Right lobe of liver (tissue), 6 donors: ENCODE measurements at regions of chr5 and their contacts with region 1.

Region 1: DNA sequence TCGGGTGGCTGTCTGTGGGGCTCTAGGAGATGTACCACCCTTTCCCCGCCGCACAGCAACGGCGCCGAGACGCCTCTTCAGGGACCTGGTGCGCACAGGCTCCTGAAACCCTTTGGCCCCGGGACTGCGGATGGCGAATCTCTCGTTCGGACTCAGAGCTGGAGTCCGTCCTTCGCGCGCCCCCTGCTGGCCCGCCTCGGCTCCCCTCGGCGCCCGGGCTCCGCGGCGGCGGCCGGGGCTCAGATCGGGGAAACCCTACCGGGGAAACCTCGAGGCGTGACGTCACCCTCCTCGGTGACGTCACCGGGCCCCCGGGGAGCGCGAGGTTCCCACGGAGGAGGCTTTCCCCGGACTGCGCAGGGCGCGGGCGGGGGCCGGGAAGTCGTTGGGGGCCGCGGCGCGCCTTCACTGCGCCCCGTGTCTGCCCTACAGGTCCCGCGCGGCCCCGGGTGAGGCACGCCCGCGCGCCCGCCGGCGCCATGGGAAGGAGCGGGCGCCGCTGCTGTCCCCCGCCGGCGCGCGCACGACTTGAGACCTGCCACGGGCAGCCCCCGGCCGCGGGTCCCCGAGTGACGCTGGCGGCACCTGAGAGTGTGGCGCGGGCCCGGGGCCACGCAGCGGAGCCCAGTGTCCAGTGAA is 7.9 kb downstream of the PRR7 start:
- DNase-seq: peak; percentile 92 to 94 (median 93)
- ATAC-seq: peak; percentile 70 to 83 (median 75)
- H3K4me3 ChIP-seq: peak overlapping the region; percentile 62 to 73 (median 66)
- H3K27ac ChIP-seq: peak overlapping the region; percentile 36 to 65 (median 64)
- H3K4me1 ChIP-seq: peaks cover 0 to 10% (median 3%) of the 10 kb centered on the region in 4 donors
- H3K27me3 ChIP-seq: no peaks in the 10 kb centered on the region
- CTCF ChIP-seq: peak; percentile 92 to 99 (median 94)
- POLR2A ChIP-seq: no peak

Region 2: DNA sequence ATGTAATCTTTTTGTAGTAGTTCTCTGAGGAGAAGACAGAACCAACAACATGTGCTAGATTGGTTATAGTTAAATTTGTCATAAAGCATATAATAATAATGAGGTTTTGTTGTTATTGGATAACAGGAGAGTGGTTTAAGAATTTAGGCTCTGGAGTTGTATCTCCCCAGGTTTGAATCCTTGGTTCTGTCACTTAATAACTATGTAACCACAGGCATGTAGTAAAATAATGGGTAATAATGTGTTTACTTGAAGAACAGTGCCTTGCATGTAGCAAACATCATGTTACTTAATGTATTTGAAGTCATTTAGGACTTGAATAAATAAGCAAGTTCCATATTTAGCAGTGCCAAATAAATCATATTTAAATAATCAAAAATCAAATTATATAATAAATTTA is 265.1 kb before region 1 on chr5:
- intact Hi-C with region 1: no loop called
- DNase-seq: no peak
- ATAC-seq: no peak
- H3K4me3 ChIP-seq: no peak overlapping the region
- H3K27ac ChIP-seq: no peak overlapping the region
- H3K4me1 ChIP-seq: peaks cover 0 to 7% (median 0%) of the 10 kb centered on the region in 4 donors
- H3K27me3 ChIP-seq: no peaks in the 10 kb centered on the region
- CTCF ChIP-seq: no peak
- POLR2A ChIP-seq: no peak

Region 3: DNA sequence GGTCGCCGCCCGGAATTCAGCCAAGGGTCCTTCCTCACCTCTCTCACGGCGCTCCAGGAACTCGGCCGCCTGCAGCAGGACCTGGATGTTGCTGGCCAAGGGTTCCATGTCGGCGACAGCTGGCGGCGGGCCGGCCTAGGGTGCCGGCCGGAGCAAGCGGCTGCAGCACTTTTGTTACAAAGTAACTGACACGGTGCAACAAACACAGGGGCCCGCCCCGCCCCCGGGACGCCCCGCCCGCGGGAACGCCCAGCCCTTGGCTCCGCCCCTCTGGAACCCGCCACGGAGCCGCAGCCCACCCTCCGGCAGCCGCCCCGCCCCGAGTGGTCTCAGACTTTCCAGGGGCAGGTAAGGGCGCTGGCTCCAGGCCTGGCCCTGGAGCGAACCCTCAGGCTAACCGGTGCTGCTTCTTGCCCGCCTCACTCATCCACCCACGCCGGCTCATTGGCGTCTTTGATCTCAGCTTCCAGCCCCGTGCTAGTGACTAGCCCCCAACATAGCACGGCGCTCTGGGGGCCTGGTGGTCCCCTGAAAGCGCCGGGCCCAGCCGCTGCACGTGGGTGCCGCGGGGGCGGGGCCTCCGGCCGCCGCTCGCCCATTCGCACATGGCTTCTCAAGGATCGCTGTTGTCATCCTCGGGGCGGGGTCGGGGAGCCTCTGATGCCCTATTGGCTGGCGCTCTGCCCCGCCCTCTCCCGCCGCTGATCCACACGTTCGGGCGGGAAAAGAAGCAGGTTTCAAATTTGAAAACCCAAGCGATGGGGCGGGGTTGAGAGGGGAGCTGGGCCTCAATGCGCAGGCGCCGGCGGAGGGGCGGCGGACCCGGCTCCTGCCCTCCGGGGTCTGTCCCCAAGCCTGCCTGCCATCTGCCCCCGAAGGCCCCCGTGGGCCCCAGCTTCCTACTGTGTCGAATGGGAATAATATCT is 142.5 kb before region 1 on chr5 and contains the start of gene MXD3:
- intact Hi-C with region 1: loop called in 1 of 2 experiments (anchors 10 kb)
- DNase-seq: peak; percentile 97 to 98 (median 97)
- ATAC-seq: peak; percentile 85 to 92 (median 88)
- H3K4me3 ChIP-seq: peak within 1 kb of the TSS; percentile 33 to 58 (median 51)
- H3K27ac ChIP-seq: no peak within 1 kb of the TSS
- H3K4me1 ChIP-seq: peaks cover 0 to 12% (median 7%) of the 10 kb centered on the region in 4 donors
- H3K27me3 ChIP-seq: no peaks in the 10 kb centered on the region
- CTCF ChIP-seq: no peak
- POLR2A ChIP-seq: no peak
- total RNA-seq, gene MXD3: 2.2 to 6.2 (median 4.9) TPM

Region 4: DNA sequence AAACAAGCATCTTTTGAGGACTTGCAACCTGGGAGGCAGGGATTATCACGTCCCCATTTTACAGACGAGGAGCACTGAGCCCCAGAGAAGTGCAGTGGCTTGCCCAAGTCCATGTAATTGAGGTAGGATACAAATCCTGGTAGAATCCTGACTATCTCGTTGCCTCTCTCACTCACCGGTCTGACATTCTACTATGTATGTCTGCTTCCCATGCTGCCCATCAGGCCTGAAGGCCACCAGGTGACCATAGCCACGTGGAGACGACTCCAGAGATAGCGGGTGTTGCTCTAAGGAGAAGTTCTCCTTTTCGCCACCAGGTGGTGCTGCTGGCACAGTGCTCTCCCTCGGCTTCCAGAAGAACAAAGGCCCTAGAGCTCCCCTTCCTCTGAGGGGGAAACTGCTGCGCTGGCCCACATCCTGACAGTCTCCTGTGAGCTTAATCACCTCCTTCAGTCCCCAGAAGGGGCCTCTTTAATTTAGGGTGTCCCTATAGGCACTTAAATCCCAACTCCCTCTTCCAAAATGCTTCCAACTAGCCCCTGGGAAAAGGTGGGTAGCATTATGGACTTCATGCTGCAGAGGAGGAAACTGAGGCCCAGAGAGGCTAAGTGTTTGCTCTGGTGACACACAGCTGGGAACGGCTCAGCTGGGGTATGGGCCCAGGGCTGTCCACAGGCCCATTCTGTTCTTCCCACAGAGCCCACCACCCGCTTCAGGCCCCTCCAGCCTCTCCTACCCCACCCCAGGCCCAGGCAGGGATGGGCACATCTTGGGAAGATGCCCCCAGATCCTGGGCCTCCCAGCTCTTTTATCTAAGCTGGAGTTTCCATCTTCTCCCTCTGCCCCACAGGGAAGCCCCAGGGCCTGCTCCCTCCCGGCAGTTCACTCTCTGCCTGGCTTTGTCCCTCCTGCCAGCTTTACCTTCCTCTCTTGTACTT is 63.9 kb before region 1 on chr5:
- intact Hi-C with region 1: loop called (anchors 5 kb)
- DNase-seq: peak; percentile 74 to 83 (median 82)
- ATAC-seq: peak; percentile 86 to 95 (median 93)
- H3K4me3 ChIP-seq: no peak overlapping the region
- H3K27ac ChIP-seq: no peak overlapping the region
- H3K4me1 ChIP-seq: no peaks in the 10 kb centered on the region
- H3K27me3 ChIP-seq: no peaks in the 10 kb centered on the region
- CTCF ChIP-seq: peak; percentile 97 to 99 (median 98)
- POLR2A ChIP-seq: no peak

Region 5: DNA sequence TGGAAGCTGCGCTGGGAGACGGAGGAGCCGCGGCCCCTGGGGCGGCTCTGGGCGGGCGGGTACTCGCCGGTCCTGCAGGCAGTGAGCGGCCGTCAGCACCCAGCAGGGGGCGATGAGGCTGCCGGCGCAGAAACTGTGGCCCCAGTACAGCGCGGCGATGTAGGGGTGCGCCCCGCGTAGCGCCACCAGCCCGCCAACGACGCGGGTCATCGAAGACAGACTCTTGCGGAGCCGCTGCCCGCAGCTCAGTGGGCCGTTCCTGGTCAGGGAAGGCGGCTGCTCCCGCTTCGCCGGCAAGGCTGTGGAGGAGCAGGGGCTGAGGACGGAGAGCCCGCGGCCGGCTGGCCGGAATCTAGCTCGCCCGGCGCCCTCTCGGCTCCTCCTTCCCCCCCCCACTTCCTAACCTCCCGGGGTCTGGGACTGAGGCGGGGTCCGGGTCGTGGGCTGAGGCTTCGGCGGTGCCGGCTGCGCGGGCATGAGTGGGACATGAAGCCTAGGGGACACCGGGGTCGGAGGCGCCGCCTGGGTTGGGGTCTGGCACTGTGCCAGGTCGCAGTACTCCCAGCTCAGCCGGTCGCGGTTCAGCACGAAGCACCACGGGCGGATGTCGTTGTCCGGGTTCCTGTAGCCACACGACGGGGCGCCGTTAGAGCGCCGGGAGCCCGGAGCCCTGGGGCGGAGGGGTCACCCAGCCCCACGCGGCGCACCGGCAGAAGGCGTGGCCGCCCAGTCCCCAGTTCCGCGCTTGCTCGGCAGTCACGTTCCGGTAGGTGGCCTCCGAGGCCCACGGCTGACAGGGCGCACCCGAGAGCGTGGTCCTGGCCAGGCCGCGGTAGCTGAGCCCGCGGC is 50.5 kb before region 1 on chr5:
- intact Hi-C with region 1: loop called in 1 of 2 experiments (anchors 5 kb)
- DNase-seq: peak; percentile 80 to 91 (median 85)
- ATAC-seq: peak; percentile 65 to 86 (median 74)
- H3K4me3 ChIP-seq: peak overlapping the region; percentile 34 to 42 (median 35)
- H3K27ac ChIP-seq: no peak overlapping the region
- H3K4me1 ChIP-seq: peaks cover 0 to 40% (median 4%) of the 10 kb centered on the region in 4 donors
- H3K27me3 ChIP-seq: no peaks in the 10 kb centered on the region
- CTCF ChIP-seq: peak; percentile 39 to 75 (median 48)
- POLR2A ChIP-seq: no peak